BJ (cell line): ENCODE measurements at regions of chr20 and their contacts with region 1.

Region 1: GRCh38 chr20:48759090-48759489 is 68.7 kb downstream of the PREX1 start:
- DNase-seq: no peak
- H3K4me3 ChIP-seq: no peak overlapping the region
- H3K27me3 ChIP-seq: no peaks in the 10 kb centered on the region
- CTCF ChIP-seq: no peak

Region 2: DNA sequence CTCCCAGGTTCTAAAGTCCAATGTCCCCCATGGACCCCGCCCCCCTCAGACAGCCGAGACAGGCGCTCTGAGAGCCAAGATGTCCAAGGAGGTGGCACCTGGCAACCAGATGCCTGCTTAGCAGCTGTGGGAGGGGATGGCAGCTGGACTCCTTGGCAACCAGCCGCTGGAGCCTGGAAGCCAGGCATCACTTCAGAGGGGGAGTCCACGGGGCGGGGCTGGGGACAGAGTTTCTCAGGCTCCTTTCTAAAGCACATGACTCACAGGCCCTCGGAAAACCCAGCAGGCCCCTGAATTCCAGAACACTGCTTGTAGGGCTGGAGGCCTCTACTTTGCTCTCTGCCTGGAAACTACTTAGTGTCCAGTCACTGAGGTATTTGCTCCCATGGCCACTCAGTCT is 17.2 kb after region 1 on chr20:
- CTCF ChIA-PET with region 1: no interaction called
- POLR2A ChIA-PET with region 1: no interaction called
- DNase-seq: peak; percentile 59
- H3K4me3 ChIP-seq: no peak overlapping the region
- H3K27me3 ChIP-seq: no peaks in the 10 kb centered on the region; the same call in 1 of the 2 replicates
- CTCF ChIP-seq: no peak

Region 3: GRCh38 chr20:48835405-48835804 is 76.3 kb after region 1 on chr20:
- CTCF ChIA-PET with region 1: no interaction called
- POLR2A ChIA-PET with region 1: interaction called, 32 read pairs
- DNase-seq: no peak
- H3K4me3 ChIP-seq: no peak overlapping the region
- H3K27me3 ChIP-seq: peaks cover 3% of the 10 kb centered on the region; the same call in 1 of the 2 replicates
- CTCF ChIP-seq: no peak